OCI-LY7 (cell line): ENCODE measurements at regions of chr14 and their contacts with region 1.

Region 1: DNA sequence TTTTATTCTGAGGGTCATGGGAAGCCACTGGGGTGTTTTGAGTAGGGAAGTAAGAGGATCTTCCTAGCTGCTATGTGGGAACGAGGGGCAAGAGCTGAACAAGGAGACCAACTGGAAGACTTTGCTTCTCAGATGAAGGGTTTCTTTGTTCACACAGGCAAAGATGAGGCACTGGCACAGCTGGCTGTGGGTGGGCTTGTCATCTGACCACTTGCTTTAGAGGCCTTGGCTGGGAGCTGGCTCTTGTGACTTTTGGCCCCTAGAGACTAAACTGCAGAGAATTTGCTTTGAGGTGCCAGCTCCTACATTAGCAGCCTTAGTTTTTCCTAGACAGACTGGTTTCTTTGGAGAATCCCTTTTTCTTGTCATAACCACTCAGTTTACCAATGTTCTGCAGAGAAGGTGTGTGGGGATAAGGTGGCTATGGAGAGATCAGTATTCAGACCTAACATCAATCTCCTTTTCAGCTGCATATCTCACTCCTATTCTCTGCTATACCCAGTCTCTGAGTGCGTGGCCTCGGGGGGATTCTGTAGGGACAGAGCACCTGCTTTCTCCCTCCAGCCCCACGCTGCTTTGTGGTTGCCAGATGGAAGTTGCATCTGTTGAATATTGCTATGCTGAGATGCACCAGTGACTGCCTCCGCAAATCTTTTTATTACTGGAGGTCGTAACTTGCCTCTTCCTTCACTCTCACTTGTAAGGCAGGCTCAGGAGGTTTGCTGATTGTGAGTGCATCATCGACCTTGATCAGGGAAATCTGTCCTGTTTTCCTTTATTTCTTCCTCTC is 12.7 kb downstream of the PPP2R5C start:
- DNase-seq: peak; percentile 95
- H3K4me3 ChIP-seq: peak overlapping the region; percentile 49
- H3K27ac ChIP-seq: peak overlapping the region; percentile 96
- H3K4me1 ChIP-seq: peaks cover 85% of the 10 kb centered on the region
- CTCF ChIP-seq: no peak

Region 2: DNA sequence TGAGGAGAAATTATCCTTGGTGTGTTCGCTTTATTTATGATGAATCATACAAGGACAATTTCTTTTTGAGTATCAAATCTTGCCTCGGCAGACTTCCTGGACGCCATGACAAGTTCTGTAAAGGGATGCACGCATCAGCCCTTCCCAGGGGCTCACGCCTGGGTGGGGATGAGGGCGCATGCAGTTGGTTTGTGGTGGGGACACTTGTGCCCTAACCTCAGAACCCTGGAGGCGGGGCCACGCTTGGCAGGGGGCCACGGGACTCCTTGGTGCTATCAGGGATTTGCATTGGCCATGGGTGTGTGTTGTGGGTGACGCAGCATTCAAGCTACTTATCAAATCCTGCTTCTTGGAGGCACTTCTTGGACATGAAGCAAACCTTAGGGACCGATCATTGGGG is 726.9 kb before region 1 on chr14:
- CTCF ChIA-PET with region 1: no interaction called
- POLR2A ChIA-PET with region 1: no interaction called
- intact Hi-C with region 1: no loop called
- DNase-seq: no peak
- H3K4me3 ChIP-seq: no peak overlapping the region
- H3K27ac ChIP-seq: no peak overlapping the region
- H3K4me1 ChIP-seq: no peaks in the 10 kb centered on the region
- CTCF ChIP-seq: no peak

Region 3: GRCh38 chr14:101707068-101707842 is 66.9 kb before region 1 on chr14:
- CTCF ChIA-PET with region 1: no interaction called
- POLR2A ChIA-PET with region 1: interaction called, 4 read pairs
- intact Hi-C with region 1: loop called (anchors 5 kb)
- DNase-seq: peak; percentile 83
- H3K4me3 ChIP-seq: no peak overlapping the region
- H3K27ac ChIP-seq: no peak overlapping the region
- H3K4me1 ChIP-seq: peaks cover 6% of the 10 kb centered on the region
- CTCF ChIP-seq: peak; percentile 94

Region 4: DNA sequence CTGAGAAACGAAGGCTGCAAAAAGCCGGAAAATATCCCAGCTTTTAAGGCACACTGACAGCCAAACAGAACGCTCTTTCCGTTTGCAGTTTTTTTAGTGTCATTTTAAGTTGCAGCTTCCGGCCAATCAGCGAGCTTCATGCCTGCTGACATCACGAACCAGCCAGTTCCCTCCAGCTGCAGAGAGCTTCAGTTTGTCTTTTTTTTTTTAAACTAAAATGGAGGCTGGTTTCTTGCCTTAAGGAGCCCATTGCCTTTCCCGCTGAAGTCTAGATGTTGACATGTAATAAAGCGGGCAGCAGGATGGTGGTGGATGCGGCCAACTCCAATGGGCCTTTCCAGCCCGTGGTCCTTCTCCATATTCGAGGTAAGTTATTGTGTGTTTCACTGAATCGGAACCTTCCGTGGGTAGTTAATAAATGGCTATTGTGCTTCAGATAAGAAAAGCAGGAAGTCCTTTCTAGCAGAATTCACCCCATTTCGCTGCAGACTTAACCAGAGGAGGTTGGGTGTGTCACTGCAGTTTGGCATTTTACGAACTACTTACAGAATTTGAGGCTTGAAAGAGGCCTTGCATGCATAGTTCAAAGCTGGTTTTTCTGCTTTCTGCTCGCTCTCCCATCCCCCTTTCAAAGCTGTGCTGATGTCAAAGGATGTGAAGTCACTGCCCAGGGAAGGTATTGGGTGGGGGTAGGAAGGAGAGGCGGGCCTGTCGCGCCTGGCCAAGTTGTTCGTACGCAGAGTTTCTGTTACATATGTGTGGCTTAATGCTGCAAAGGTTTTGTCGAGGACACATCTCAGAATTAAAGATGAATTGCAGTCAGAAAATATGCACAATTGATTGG is 35.7 kb after region 1 on chr14:
- CTCF ChIA-PET with region 1: interaction called, 7 read pairs
- POLR2A ChIA-PET with region 1: interaction called, 165 read pairs
- intact Hi-C with region 1: loop called (anchors 1 kb)
- DNase-seq: peak; percentile 96
- H3K4me3 ChIP-seq: peak overlapping the region; percentile 88
- H3K27ac ChIP-seq: peak overlapping the region; percentile 98
- H3K4me1 ChIP-seq: peaks cover 50% of the 10 kb centered on the region
- CTCF ChIP-seq: no peak

Region 5: DNA sequence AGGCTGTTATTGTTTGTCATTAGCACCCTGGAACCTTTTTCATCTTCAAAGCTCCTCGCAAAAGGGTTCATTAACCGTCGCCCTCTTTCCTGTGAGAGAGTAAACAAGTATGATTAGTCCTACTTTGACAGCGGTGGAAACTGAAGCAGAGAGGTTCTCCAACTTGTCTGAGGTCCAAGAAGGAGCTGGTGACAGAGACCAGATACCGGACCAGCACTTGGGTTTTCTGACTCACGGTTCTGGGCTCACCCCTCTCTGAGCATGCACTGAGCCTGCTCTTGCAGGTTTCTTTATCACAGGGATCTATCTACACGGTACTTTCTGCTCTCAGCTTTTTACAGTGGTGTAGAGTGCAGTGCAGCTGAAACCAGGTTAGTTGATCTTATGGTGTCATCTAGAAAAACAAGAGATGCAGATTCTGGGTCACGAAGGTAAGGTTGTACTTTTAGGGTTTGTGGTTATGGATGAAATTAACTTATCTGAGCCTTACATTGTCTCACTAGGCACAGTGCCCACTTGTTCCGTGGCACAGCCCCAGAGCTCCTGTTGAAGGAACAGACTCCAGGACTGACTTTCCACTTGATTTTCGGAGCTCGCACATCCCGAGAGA is 49.4 kb after region 1 on chr14:
- CTCF ChIA-PET with region 1: interaction called, 5 read pairs
- POLR2A ChIA-PET with region 1: interaction called, 13 read pairs
- intact Hi-C with region 1: no loop called
- DNase-seq: peak; percentile 46
- H3K4me3 ChIP-seq: peak overlapping the region; percentile 71
- H3K27ac ChIP-seq: peak overlapping the region; percentile 93
- H3K4me1 ChIP-seq: peaks cover 89% of the 10 kb centered on the region
- CTCF ChIP-seq: no peak

Region 6: GRCh38 chr14:101876555-101876938 is 102.3 kb after region 1 on chr14:
- CTCF ChIA-PET with region 1: interaction called, 5 read pairs
- POLR2A ChIA-PET with region 1: interaction called, 3 read pairs
- intact Hi-C with region 1: loop called (anchors 1 kb)
- DNase-seq: peak; percentile 97
- H3K4me3 ChIP-seq: peak overlapping the region; percentile 63
- H3K27ac ChIP-seq: peak overlapping the region; percentile 98
- H3K4me1 ChIP-seq: peaks cover 74% of the 10 kb centered on the region
- CTCF ChIP-seq: no peak

Region 7: GRCh38 chr14:101947906-101948665 is 173.9 kb after region 1 on chr14:
- CTCF ChIA-PET with region 1: interaction called, 5 read pairs
- POLR2A ChIA-PET with region 1: interaction called, 6 read pairs
- intact Hi-C with region 1: loop called (anchors 2 kb)
- DNase-seq: peak; percentile 100
- H3K4me3 ChIP-seq: peak overlapping the region; percentile 82
- H3K27ac ChIP-seq: peak overlapping the region; percentile 49
- H3K4me1 ChIP-seq: peaks cover 9% of the 10 kb centered on the region
- CTCF ChIP-seq: no peak